T-cell (primary cell): ENCODE measurements at regions of chr14 and their contacts with region 1.

Region 1: GRCh38 chr14:54516734-54517133 is 7.0 kb downstream of the CGRRF1 start:
- DNase-seq: no peak
- ATAC-seq: no peak
- H3K4me3 ChIP-seq: no peak overlapping the region
- H3K4me3 Mint-ChIP-seq: no peak overlapping the region
- H3K27ac ChIP-seq: no peak overlapping the region
- H3K27ac Mint-ChIP-seq: no peak overlapping the region
- H3K4me1 ChIP-seq: peaks cover 0 to 6% of the 10 kb centered on the region in 2 experiments
- H3K4me1 Mint-ChIP-seq: peaks cover 49 to 60% (median 54%) of the 10 kb centered on the region in 3 donors
- H3K27me3 ChIP-seq: no peaks in the 10 kb centered on the region
- H3K27me3 Mint-ChIP-seq: no peaks in the 10 kb centered on the region

Region 2: GRCh38 chr14:54503476-54504257 is 13.1 kb before region 1 on chr14:
- CTCF ChIA-PET with region 1: interaction called, 4 to 5 read pairs
- POLR2A ChIA-PET with region 1: interaction called in 1 of 2 experiments, 10 read pairs
- DNase-seq: no peak
- ATAC-seq: no peak
- H3K4me3 ChIP-seq: no peak overlapping the region
- H3K4me3 Mint-ChIP-seq: no peak overlapping the region
- H3K27ac ChIP-seq: no peak overlapping the region
- H3K27ac Mint-ChIP-seq: no peak overlapping the region
- H3K4me1 ChIP-seq: no peaks in the 10 kb centered on the region
- H3K4me1 Mint-ChIP-seq: peaks cover 1 to 2% (median 2%) of the 10 kb centered on the region in 3 donors
- H3K27me3 ChIP-seq: peaks cover 0 to 17% of the 10 kb centered on the region in 2 experiments
- H3K27me3 Mint-ChIP-seq: peaks cover 16 to 24% of the 10 kb centered on the region in 2 donors